Activated T-helper 2 cell treated with anti-CD3 and anti-CD28 coated beads, Interferon-gamma antibody, Interleukin-2, Interleukin-4, amounts not matched to agents 10 μg/mL and 5 μg/mL and 100 μg/mL, durations not matched to agents 14 hours and 24 hours and 36 hours (primary cell): ENCODE measurements at regions of chr4 and their contacts with region 1.

Region 1: GRCh38 chr4:21765810-21766407 is 182.7 kb downstream of the KCNIP4 start:
- DNase-seq: no peak
- H3K4me3 Mint-ChIP-seq: no peak overlapping the region
- H3K27ac Mint-ChIP-seq: no peak overlapping the region
- H3K4me1 Mint-ChIP-seq: peaks cover 6% of the 10 kb centered on the region
- H3K27me3 Mint-ChIP-seq: no peaks in the 10 kb centered on the region

Region 2: DNA sequence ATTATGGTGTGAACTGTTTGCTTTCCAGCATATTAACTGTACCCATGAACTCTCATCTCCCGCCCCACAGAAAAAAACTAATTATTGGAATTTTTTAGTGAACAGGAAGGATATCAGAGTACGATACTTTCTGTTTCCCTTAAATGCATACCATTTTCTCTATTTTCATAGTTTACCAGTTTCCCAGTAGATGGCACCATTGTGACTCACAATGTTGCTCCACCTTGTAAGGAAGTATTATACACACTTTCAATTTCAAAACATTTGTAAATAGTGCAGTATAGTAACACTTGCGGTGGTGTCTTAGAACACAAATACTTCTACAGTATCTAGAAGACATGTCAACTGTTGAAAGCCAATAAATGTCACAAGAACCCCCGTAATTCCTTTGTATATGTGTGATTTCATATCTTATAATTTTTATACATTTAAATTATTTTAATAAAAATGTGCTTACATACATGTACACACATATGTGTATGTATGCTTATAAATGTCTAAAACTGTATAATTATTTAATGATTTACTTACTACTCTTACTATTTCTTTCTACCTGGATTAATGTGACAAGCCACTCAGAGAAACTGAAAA is 1347.0 kb before region 1 on chr4:
- intact Hi-C with region 1: loop called (anchors 2 kb)
- DNase-seq: no peak
- H3K4me3 Mint-ChIP-seq: peak overlapping the region; percentile 61
- H3K27ac Mint-ChIP-seq: peak overlapping the region; percentile 7
- H3K4me1 Mint-ChIP-seq: peaks cover 10% of the 10 kb centered on the region
- H3K27me3 Mint-ChIP-seq: peaks cover 1% of the 10 kb centered on the region

Region 3: DNA sequence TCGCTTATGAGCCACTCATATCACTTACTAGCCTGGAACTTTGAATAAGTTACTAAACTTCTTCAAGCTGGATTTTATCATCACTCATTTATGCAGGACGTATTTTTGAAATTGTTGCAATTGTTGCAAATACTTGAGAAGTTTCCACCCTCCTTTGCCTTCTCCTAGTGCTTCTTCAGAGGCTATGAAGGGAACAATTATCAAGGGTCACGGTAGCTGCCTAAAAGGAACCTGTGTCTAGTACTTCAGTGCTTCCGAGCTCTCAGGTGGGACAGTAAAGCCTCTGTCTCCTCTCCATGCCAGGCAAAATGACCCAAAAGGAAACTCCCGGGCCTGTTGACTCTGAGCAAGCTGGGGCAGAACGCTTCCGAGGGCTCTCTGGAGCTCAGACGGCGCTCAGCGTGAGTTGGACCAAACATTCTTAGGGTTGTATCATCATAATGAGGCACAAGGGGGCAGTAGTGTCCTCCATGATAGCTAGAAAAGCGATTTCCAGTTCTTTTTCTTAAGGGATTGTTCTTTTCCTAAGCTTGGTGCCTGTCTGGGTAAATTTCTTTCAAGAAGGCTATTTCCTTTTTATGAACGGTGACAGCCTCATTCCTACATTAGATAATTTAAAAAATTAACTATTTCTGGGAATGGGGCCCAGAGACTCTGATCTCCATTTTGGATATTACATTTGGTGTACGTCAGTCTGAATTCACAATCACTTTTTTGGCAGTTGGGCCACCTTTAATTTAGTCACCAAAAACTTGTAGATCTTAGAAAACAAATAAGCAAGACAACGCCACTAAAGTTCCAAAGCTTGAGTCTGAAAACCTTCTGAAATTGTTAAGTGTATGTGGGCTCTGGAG is 992.5 kb before region 1 on chr4:
- intact Hi-C with region 1: loop called (anchors 5 kb)
- DNase-seq: no peak
- H3K4me3 Mint-ChIP-seq: no peak overlapping the region
- H3K27ac Mint-ChIP-seq: no peak overlapping the region
- H3K4me1 Mint-ChIP-seq: no peaks in the 10 kb centered on the region
- H3K27me3 Mint-ChIP-seq: no peaks in the 10 kb centered on the region

Region 4: GRCh38 chr4:21507439-21507838 is 258.5 kb before region 1 on chr4:
- intact Hi-C with region 1: loop called (anchors 5 kb)
- DNase-seq: no peak
- H3K4me3 Mint-ChIP-seq: no peak overlapping the region
- H3K27ac Mint-ChIP-seq: no peak overlapping the region
- H3K4me1 Mint-ChIP-seq: no peaks in the 10 kb centered on the region
- H3K27me3 Mint-ChIP-seq: no peaks in the 10 kb centered on the region